HepG2 (cell line): ENCODE measurements at regions of chr9 and their contacts with region 1.

Region 1: GRCh38 chr9:69056191-69056815 is 20.8 kb downstream of the FXN start:
- DNase-seq: no peak
- ATAC-seq: no peak
- H3K4me3 ChIP-seq: no peak overlapping the region
- H3K27ac ChIP-seq: no peak overlapping the region
- H3K4me1 ChIP-seq: no peaks in the 10 kb centered on the region
- H3K27me3 ChIP-seq: no peaks in the 10 kb centered on the region
- CTCF ChIP-seq: no peak
- EP300 ChIP-seq: no peak
- POLR2A ChIP-seq: no peak
- RAD21 ChIP-seq: no peak

Region 2: DNA sequence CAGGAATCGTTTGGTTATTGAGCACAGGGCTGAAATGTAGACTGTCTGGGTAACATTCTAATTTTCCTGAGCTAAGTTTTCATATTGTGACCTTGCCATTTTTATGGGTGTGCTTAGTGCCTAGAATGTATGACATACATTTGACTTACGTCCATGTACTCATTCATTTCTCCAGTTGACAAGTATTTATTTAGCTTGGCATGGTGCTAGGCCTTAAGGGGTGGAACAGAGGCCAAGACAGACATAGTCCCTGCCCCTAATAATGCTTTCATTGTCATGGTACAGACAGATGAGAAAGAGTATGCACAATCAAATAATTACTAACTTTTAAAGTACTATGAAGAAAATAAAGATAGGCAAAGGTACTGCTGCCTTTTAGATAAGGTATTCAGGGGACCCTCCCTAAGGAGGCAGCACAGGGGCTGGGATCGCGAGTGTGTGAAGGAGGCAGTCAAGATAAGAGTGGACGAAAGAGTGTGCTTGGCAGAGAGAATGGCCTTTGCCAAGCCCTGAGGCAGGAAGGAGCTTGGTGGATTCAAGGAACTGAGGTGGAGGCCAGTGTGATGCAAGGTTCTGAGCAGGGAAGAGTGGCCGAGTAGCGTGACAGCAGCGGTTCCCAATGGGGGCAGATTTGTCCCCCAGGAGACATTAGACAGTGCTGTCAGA is 223.3 kb before region 1 on chr9:
- CTCF ChIA-PET with region 1: no interaction called
- POLR2A ChIA-PET with region 1: no interaction called
- in situ Hi-C with region 1: no loop called
- intact Hi-C with region 1: no loop called
- DNase-seq: no peak
- ATAC-seq: no peak
- H3K4me3 ChIP-seq: no peak overlapping the region
- H3K27ac ChIP-seq: no peak overlapping the region
- H3K4me1 ChIP-seq: peaks cover 19% of the 10 kb centered on the region
- H3K27me3 ChIP-seq: no peaks in the 10 kb centered on the region
- CTCF ChIP-seq: no peak
- EP300 ChIP-seq: no peak
- POLR2A ChIP-seq: no peak
- RAD21 ChIP-seq: no peak

Region 3: DNA sequence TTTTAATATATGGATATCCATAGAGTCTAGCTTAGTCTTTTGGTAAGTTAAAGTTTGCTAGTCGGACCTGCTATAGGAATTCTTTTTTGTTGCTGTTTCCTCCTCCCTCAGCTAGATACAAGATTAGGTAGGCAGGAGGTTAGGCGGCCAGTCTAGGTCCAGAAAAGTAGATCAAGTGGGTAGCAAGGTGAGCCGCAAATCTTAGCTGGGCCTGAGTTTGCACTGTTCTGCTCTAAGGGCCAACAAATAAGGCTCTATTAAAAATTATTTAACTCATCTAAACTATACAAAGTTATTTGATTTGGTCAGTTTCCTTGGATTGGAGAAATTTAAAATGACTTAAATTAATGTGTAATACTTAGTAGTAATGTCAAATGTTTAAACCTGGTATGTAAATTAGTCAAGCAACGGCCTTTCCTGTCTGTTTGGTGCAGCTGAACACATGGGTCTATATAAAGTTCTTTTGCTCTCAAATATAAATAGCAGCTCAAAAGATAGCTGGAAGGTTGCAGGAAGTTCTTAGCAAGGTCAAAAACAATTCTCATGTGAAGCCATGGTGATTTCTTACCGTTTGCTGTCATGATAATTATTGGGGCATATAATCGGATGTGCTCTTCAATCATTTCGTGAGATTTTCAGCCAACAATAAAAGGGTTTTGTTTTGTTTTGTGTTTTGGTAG is 114.4 kb before region 1 on chr9:
- CTCF ChIA-PET with region 1: no interaction called
- POLR2A ChIA-PET with region 1: no interaction called
- in situ Hi-C with region 1: no loop called
- intact Hi-C with region 1: no loop called
- DNase-seq: no peak
- ATAC-seq: no peak
- H3K4me3 ChIP-seq: no peak overlapping the region
- H3K27ac ChIP-seq: no peak overlapping the region
- H3K4me1 ChIP-seq: no peaks in the 10 kb centered on the region
- H3K27me3 ChIP-seq: no peaks in the 10 kb centered on the region
- CTCF ChIP-seq: no peak
- EP300 ChIP-seq: no peak
- POLR2A ChIP-seq: no peak
- RAD21 ChIP-seq: no peak

Region 4: DNA sequence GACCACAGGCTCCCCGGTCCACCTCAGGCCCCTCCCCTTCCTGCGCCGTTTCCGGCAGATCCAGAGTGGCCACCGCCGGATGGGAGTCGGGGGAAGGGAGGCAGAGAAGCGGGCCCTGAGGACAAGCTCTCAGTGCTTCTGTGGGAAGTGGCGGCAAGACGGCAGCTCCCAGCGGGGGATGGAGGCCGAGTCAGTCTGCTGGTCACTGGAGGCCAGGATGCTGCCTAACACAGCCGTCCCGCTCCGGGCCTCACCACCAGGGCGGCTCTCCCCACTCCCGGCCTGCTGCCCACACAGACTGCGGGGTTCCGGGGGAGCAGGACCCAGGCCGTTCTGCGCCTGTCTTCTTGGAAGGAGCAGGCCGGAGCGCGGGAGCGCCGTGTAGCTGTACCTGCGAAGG is 10.7 kb after region 1 on chr9:
- CTCF ChIA-PET with region 1: no interaction called
- POLR2A ChIA-PET with region 1: no interaction called
- in situ Hi-C with region 1: no loop called
- intact Hi-C with region 1: no loop called
- DNase-seq: no peak
- ATAC-seq: peak; percentile 28; the same call in 2 of the 3 replicates
- H3K4me3 ChIP-seq: no peak overlapping the region
- H3K27ac ChIP-seq: no peak overlapping the region
- H3K4me1 ChIP-seq: peaks cover 19% of the 10 kb centered on the region
- H3K27me3 ChIP-seq: no peaks in the 10 kb centered on the region
- CTCF ChIP-seq: no peak
- EP300 ChIP-seq: no peak
- POLR2A ChIP-seq: no peak
- RAD21 ChIP-seq: no peak

Region 5: GRCh38 chr9:69085569-69086283 is 29.4 kb after region 1 on chr9:
- CTCF ChIA-PET with region 1: no interaction called
- POLR2A ChIA-PET with region 1: no interaction called
- in situ Hi-C with region 1: no loop called
- intact Hi-C with region 1: no loop called
- DNase-seq: peak; percentile 53
- ATAC-seq: peak; percentile 81
- H3K4me3 ChIP-seq: peak overlapping the region in 2 of 3 experiments; percentile 26 to 38; a peak in 2 of 6 replicates
- H3K27ac ChIP-seq: peak overlapping the region; percentile 32
- H3K4me1 ChIP-seq: peaks cover 26% of the 10 kb centered on the region
- H3K27me3 ChIP-seq: no peaks in the 10 kb centered on the region
- CTCF ChIP-seq: no peak
- EP300 ChIP-seq: no peak
- POLR2A ChIP-seq: no peak
- RAD21 ChIP-seq: no peak

Region 6: GRCh38 chr9:69199769-69200470 is 143.6 kb after region 1 on chr9:
- CTCF ChIA-PET with region 1: no interaction called
- POLR2A ChIA-PET with region 1: interaction called, 3 read pairs
- in situ Hi-C with region 1: loop called (anchors 5 kb)
- intact Hi-C with region 1: no loop called
- DNase-seq: no peak
- ATAC-seq: peak; percentile 49
- H3K4me3 ChIP-seq: no peak overlapping the region
- H3K27ac ChIP-seq: no peak overlapping the region
- H3K4me1 ChIP-seq: peaks cover 81% of the 10 kb centered on the region
- H3K27me3 ChIP-seq: no peaks in the 10 kb centered on the region
- CTCF ChIP-seq: peak; percentile 31
- EP300 ChIP-seq: no peak
- POLR2A ChIP-seq: no peak
- RAD21 ChIP-seq: no peak

Region 7: DNA sequence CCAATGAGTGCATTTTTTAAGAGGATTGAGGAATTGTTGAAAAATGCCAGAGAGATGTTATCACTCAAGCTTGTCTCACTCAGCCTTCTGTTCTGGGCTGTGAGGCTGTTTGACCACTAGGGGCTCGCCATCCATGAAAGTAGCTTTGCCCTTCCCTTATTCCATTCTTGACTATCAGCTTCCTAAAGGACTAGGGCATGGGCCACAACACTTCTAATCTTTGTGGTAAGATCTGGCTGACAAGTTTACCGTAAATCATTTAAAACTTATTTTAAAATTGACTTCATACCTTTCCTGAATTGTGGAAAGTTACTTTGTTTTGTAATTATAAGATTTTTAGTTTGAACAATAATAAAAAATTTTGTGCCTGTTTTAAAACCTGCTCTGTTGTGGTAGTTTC is 167.3 kb after region 1 on chr9:
- CTCF ChIA-PET with region 1: interaction called, 10 read pairs
- POLR2A ChIA-PET with region 1: no interaction called
- in situ Hi-C with region 1: no loop called
- intact Hi-C with region 1: no loop called
- DNase-seq: peak; percentile 52
- ATAC-seq: peak; percentile 93
- H3K4me3 ChIP-seq: no peak overlapping the region
- H3K27ac ChIP-seq: no peak overlapping the region
- H3K4me1 ChIP-seq: no peaks in the 10 kb centered on the region
- H3K27me3 ChIP-seq: no peaks in the 10 kb centered on the region
- CTCF ChIP-seq: peak; percentile 66
- EP300 ChIP-seq: no peak
- POLR2A ChIP-seq: no peak
- RAD21 ChIP-seq: peak; percentile 17; the same call in 1 of the 2 replicates